ENCODE measurements at regions of chr18 and their contacts with region 1.

Region 1: DNA sequence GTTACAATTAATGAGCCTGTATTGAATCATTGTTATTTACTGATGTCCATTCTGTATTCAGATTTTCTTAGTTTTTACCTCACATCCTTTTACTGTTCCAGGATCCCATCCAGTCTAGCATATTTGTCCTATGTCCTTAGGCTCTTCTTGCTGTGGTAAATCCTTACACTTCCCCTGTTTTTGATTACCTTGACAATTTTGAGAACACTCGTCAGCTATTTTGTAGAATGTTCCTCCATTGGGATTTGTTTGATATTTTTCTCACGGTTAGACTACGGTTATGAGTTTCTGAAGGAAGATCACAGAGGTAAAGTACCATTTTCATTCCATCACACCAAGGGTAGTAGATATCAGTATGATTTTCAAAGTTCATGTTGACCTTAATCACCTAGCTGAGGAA is 202.3 kb downstream of the AKAIN1 start:
- DNase-seq: no peak
- H3K4me3 ChIP-seq: no peak overlapping the region
- H3K27ac ChIP-seq: no peak overlapping the region
- H3K4me1 ChIP-seq: no peaks in the 10 kb centered on the region
- CTCF ChIP-seq: no peak

Region 2: DNA sequence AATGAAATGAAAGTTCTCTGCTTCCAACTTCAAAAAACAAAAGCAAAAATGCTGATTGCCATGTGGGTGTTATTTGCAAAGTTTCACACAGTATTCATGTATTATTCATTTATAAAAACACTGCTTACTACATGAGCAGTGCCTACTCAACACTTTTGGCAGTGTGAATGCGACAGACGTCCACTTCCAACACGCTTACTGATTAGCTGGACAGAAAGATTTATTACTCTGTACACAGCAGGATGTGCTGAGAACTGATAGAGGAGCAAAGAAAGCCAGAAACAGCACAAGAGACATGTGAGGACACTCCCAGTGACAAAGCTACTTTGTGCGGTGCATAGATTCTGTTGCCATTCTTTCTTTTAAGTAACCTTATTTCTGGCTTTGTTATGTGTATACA is 798.4 kb before region 1 on chr18:
- CTCF ChIA-PET with region 1: no interaction called
- POLR2A ChIA-PET with region 1: no interaction called
- intact Hi-C with region 1: no loop called
- DNase-seq: no peak
- H3K4me3 ChIP-seq: no peak overlapping the region
- H3K27ac ChIP-seq: no peak overlapping the region
- H3K4me1 ChIP-seq: no peaks in the 10 kb centered on the region
- CTCF ChIP-seq: no peak

Region 3: GRCh38 chr18:5040476-5040875 is 45.8 kb after region 1 on chr18:
- CTCF ChIA-PET with region 1: no interaction called
- POLR2A ChIA-PET with region 1: interaction called, 3 read pairs
- intact Hi-C with region 1: loop called (anchors 10 kb)
- DNase-seq: no peak
- H3K4me3 ChIP-seq: no peak overlapping the region
- H3K27ac ChIP-seq: no peak overlapping the region
- H3K4me1 ChIP-seq: no peaks in the 10 kb centered on the region
- CTCF ChIP-seq: no peak

Region 4: DNA sequence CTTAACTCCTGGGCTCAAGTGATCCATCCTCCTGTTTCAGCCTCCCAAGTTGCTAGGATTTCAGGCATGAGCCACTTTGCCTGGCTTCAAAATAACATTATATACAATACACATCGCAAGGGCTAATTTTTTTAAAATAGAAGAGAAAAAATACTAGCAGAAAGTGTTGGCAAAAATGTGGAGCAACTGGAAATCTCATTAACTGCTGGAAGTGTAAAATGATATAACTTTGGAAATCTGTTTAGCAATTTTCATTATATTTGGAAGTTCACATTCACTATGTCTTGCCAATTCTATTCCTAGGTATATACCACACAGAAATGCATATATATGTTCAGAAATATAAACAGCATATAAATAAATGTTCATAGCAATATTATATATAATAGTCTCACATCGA is 355.9 kb after region 1 on chr18:
- CTCF ChIA-PET with region 1: no interaction called
- POLR2A ChIA-PET with region 1: no interaction called
- intact Hi-C with region 1: no loop called
- DNase-seq: no peak
- H3K4me3 ChIP-seq: no peak overlapping the region
- H3K27ac ChIP-seq: no peak overlapping the region
- H3K4me1 ChIP-seq: no peaks in the 10 kb centered on the region
- CTCF ChIP-seq: no peak